CD4-positive, alpha-beta T cell (primary cell): ENCODE measurements at regions of chr2 and their contacts with region 1.

Region 1: DNA sequence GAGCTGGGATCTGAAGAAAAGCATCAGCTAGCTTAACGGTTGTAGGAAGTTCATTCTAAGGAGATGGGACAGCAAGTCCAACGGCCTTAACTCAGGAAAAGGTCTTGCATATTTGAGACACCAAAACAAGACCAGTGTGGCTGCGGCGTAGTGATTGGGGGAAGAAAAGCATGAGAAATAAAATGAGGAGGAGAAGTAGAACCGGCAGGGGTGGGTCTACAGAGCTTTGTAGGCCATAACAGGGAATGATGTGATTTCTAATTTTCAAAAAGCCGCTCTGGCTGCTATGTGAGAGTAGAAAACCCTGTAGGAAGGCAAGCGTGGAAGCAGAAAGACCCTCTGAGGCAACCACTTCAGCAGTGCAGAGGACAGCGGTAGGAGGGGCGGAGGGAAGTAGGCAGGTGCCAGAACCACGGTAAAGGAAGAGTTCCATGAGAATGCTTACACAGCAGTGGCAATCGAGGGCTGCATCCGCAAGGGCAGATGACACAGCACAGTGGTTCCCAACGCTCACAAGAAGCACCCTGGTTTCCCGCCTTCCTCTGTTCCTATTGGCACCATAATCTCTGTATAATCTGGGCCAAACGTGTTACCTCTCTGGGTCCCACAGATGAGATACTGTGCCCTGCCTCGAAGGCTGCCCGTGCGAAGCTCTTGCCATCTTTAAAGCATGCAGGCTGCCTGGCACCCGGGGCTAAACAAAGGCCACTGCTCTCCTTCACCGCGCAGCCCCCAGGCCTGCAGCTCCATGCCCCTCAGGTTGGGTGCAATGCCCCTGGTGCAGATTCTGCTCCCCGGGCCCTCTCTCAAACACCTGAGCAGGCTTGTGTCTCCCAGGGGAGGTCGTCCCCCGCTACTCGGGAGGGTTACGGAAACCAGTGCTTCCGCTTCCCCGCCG is 791 bp downstream of the ANKRD39 start:
- DNase-seq: peak in 6 of 14 experiments; percentile 21 to 59 (median 52)
- ATAC-seq: no peak
- H3K4me3 ChIP-seq: peak overlapping the region; percentile 94
- H3K4me3 Mint-ChIP-seq: peak overlapping the region; percentile 92
- H3K27ac ChIP-seq: peak overlapping the region; percentile 65 to 66
- H3K27ac Mint-ChIP-seq: peak overlapping the region; percentile 74
- H3K4me1 ChIP-seq: peaks cover 51% of the 10 kb centered on the region
- H3K4me1 Mint-ChIP-seq: peaks cover 49% of the 10 kb centered on the region
- H3K27me3 ChIP-seq: no peaks in the 10 kb centered on the region
- H3K27me3 Mint-ChIP-seq: no peaks in the 10 kb centered on the region
- CTCF ChIP-seq: no peak

Region 2: GRCh38 chr2:96773922-96774321 is 83.1 kb before region 1 on chr2:
- CTCF ChIA-PET with region 1: interaction called, 5 read pairs
- POLR2A ChIA-PET with region 1: interaction called, 11 read pairs
- intact Hi-C with region 1: no loop called
- DNase-seq: peak; percentile 17 to 81 (median 45)
- ATAC-seq: peak; percentile 88
- H3K4me3 ChIP-seq: peak overlapping the region; percentile 68
- H3K4me3 Mint-ChIP-seq: peak overlapping the region; percentile 96
- H3K27ac ChIP-seq: peak overlapping the region; percentile 50 to 70
- H3K27ac Mint-ChIP-seq: peak overlapping the region; percentile 91
- H3K4me1 ChIP-seq: peaks cover 26% of the 10 kb centered on the region
- H3K4me1 Mint-ChIP-seq: peaks cover 22% of the 10 kb centered on the region
- H3K27me3 ChIP-seq: no peaks in the 10 kb centered on the region
- H3K27me3 Mint-ChIP-seq: no peaks in the 10 kb centered on the region
- CTCF ChIP-seq: no peak

Region 3: GRCh38 chr2:96839293-96839874 is 17.6 kb before region 1 on chr2:
- CTCF ChIA-PET with region 1: interaction called, 18 read pairs
- POLR2A ChIA-PET with region 1: interaction called, 12 read pairs
- intact Hi-C with region 1: no loop called
- DNase-seq: peak; percentile 66 to 92 (median 84)
- ATAC-seq: peak; percentile 98
- H3K4me3 ChIP-seq: peak overlapping the region; percentile 46
- H3K4me3 Mint-ChIP-seq: peak overlapping the region; percentile 70
- H3K27ac ChIP-seq: no peak overlapping the region
- H3K27ac Mint-ChIP-seq: peak overlapping the region; percentile 68
- H3K4me1 ChIP-seq: peaks cover 22% of the 10 kb centered on the region
- H3K4me1 Mint-ChIP-seq: peaks cover 21% of the 10 kb centered on the region
- H3K27me3 ChIP-seq: no peaks in the 10 kb centered on the region
- H3K27me3 Mint-ChIP-seq: no peaks in the 10 kb centered on the region
- CTCF ChIP-seq: no peak

Region 4: GRCh38 chr2:96874118-96874831 is 17.2 kb after region 1 on chr2:
- CTCF ChIA-PET with region 1: interaction called, 47 read pairs
- POLR2A ChIA-PET with region 1: interaction called, 44 read pairs
- intact Hi-C with region 1: no loop called
- DNase-seq: peak in 2 of 14 experiments; percentile 70 to 73
- ATAC-seq: no peak
- H3K4me3 ChIP-seq: no peak overlapping the region
- H3K4me3 Mint-ChIP-seq: peak overlapping the region; percentile 62
- H3K27ac ChIP-seq: no peak overlapping the region
- H3K27ac Mint-ChIP-seq: peak overlapping the region; percentile 75
- H3K4me1 ChIP-seq: peaks cover 33% of the 10 kb centered on the region
- H3K4me1 Mint-ChIP-seq: peaks cover 45% of the 10 kb centered on the region
- H3K27me3 ChIP-seq: no peaks in the 10 kb centered on the region
- H3K27me3 Mint-ChIP-seq: no peaks in the 10 kb centered on the region
- CTCF ChIP-seq: no peak

Region 5: GRCh38 chr2:96923810-96924774 is 67.1 kb after region 1 on chr2:
- CTCF ChIA-PET with region 1: interaction called, 14 read pairs
- POLR2A ChIA-PET with region 1: interaction called, 13 read pairs
- intact Hi-C with region 1: no loop called
- DNase-seq: peak in 9 of 14 experiments; percentile 20 to 58 (median 39)
- ATAC-seq: peak; percentile 71
- H3K4me3 ChIP-seq: peak overlapping the region; percentile 48
- H3K4me3 Mint-ChIP-seq: peak overlapping the region; percentile 79
- H3K27ac ChIP-seq: peak overlapping the region; percentile 26 to 51
- H3K27ac Mint-ChIP-seq: peak overlapping the region; percentile 92
- H3K4me1 ChIP-seq: peaks cover 28% of the 10 kb centered on the region
- H3K4me1 Mint-ChIP-seq: peaks cover 37% of the 10 kb centered on the region
- H3K27me3 ChIP-seq: no peaks in the 10 kb centered on the region
- H3K27me3 Mint-ChIP-seq: no peaks in the 10 kb centered on the region
- CTCF ChIP-seq: no peak

Region 6: GRCh38 chr2:96945012-96945804 is 88.2 kb after region 1 on chr2:
- CTCF ChIA-PET with region 1: interaction called, 40 read pairs
- POLR2A ChIA-PET with region 1: interaction called, 30 read pairs
- intact Hi-C with region 1: no loop called
- DNase-seq: no peak
- ATAC-seq: no peak
- H3K4me3 ChIP-seq: no peak overlapping the region
- H3K4me3 Mint-ChIP-seq: no peak overlapping the region
- H3K27ac ChIP-seq: no peak overlapping the region
- H3K27ac Mint-ChIP-seq: no peak overlapping the region
- H3K4me1 ChIP-seq: peaks cover 25% of the 10 kb centered on the region
- H3K4me1 Mint-ChIP-seq: peaks cover 44% of the 10 kb centered on the region
- H3K27me3 ChIP-seq: no peaks in the 10 kb centered on the region
- H3K27me3 Mint-ChIP-seq: no peaks in the 10 kb centered on the region
- CTCF ChIP-seq: no peak

Region 7: DNA sequence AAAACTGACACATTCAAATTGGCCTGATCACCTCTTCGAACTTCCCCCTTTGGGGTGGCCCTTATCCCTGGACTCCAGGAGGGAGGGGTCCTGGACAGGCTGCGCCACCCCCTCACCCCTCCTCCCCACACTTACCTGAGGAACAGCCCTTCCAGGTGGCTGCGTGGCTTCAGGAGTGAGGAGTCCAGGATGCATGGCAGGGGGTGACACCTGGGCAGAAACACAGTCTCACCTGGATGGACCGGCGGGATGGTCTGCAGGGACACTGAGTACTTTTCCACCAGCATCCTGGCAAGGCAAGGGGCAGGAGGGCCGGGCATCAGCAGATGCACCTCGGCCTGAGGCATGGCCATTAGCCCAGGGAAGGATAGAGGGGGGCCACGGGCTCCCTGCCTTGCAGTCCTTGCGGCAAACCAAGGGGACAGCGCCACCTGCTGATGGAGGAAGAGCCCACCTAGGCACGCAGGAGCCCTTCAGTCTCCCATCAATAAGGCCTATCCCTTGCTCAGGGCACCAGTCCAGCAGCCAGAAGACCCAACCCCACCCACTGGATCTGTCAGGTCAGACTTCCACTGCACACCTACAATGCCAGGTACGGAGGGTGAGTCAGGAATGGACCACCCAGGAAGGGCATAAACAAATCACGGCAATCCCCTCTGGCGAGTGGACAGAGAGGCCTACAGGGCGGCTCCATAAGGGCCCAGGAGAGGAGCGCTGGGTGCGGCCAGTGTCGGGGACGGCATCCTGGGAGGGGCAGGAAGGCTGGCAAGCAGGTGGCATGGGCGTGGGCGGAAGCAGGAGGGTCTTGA is 103.3 kb after region 1 on chr2:
- CTCF ChIA-PET with region 1: interaction called, 72 read pairs
- POLR2A ChIA-PET with region 1: interaction called, 116 read pairs
- intact Hi-C with region 1: loop called (anchors 1 kb)
- DNase-seq: peak; percentile 75 to 93 (median 84)
- ATAC-seq: no peak
- H3K4me3 ChIP-seq: no peak overlapping the region
- H3K4me3 Mint-ChIP-seq: peak overlapping the region; percentile 71
- H3K27ac ChIP-seq: no peak overlapping the region
- H3K27ac Mint-ChIP-seq: peak overlapping the region; percentile 93
- H3K4me1 ChIP-seq: peaks cover 56% of the 10 kb centered on the region
- H3K4me1 Mint-ChIP-seq: peaks cover 56% of the 10 kb centered on the region
- H3K27me3 ChIP-seq: no peaks in the 10 kb centered on the region
- H3K27me3 Mint-ChIP-seq: no peaks in the 10 kb centered on the region
- CTCF ChIP-seq: peak; percentile 96

Region 8: DNA sequence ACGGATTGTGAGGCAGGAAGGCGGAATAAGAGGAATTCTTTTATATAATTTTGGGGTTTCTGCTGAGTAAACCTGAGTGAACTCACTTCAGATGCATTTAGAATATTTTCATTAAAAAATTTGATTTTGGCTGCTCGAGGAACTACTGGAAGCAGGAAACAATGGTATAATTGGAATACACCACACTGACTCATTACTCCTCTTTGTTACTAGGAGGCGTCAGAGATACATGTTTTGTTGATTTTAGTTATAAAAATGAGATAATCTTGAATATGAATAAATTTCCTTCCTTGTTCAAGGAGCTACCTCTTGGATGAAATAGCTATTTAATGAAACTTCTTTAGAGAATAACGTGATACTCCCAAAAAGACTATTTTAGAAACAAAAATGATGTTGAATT is 353.3 kb after region 1 on chr2:
- CTCF ChIA-PET with region 1: no interaction called
- POLR2A ChIA-PET with region 1: no interaction called
- intact Hi-C with region 1: no loop called
- DNase-seq: no peak
- ATAC-seq: no peak
- H3K4me3 ChIP-seq: no peak overlapping the region
- H3K4me3 Mint-ChIP-seq: no peak overlapping the region
- H3K27ac ChIP-seq: no peak overlapping the region
- H3K27ac Mint-ChIP-seq: no peak overlapping the region
- H3K4me1 ChIP-seq: no peaks in the 10 kb centered on the region
- H3K4me1 Mint-ChIP-seq: no peaks in the 10 kb centered on the region
- H3K27me3 ChIP-seq: no peaks in the 10 kb centered on the region
- H3K27me3 Mint-ChIP-seq: no peaks in the 10 kb centered on the region
- CTCF ChIP-seq: no peak